ENCODE measurements at regions of chr10 and their contacts with region 1.

Region 1: DNA sequence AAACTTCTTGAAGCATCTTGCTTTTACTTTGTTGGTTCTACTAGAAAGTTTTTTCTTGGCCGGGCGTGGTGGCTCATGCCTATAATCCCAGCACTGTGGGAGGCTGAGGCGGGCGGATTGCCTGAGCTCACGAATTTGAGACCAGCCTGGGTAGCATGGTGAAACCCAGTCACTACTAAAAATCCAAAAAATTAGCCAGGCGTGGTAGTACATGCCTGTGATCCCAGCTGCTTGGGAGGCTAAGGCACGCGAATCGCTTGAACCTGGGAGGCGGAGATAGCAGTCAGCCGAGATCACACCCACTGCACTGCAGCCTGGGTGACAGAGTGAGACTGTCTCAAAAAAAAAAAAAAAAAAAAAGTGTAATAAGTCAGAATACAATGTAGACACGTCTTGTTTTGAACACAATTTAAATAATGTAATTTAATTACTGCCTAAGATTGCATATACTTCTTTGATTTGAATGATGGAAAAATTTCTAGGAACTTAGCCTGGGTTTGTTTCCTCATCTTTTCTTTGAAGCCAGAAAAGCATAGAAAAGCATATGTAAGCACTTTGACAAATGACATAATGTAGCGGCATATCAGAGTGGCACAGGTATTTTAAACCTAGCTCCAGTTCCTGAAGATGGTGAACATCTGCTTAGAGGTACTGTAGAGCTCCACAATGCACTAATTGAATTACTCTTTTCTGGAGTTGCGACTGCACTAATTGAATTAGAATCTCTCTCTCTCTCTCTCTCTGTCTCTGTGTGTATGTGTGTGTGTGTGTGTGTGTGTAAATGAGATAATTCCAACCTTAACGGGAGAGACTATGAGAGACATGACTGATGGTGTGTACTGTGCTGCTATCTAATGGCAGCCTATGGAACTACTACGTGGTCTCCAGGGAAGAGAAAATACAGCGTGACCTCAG is 87.8 kb downstream of the BTRC start:
- DNase-seq: peak in 1 of 2 donors; percentile 17
- ATAC-seq: peak; percentile 82 to 93 (median 84)
- H3K4me3 ChIP-seq: no peak overlapping the region
- H3K27ac ChIP-seq: no peak overlapping the region
- H3K4me1 ChIP-seq: peaks cover 0 to 34% (median 16%) of the 10 kb centered on the region in 9 donors
- H3K27me3 ChIP-seq: no peaks in the 10 kb centered on the region
- CTCF ChIP-seq: peak in 8 of 9 donors; percentile 29 to 68 (median 62)

Region 2: GRCh38 chr10:101291331-101292193 is 150.2 kb before region 1 on chr10:
- intact Hi-C with region 1: loop called in 4 of 10 experiments (anchors 2 to 10 kb)
- DNase-seq: peak; percentile 59 to 69
- ATAC-seq: peak; percentile 76 to 84 (median 80)
- H3K4me3 ChIP-seq: peak overlapping the region; percentile 41 to 67 (median 62)
- H3K27ac ChIP-seq: peak overlapping the region in 6 of 10 donors; percentile 53 to 81 (median 68)
- H3K4me1 ChIP-seq: peaks cover 0 to 22% (median 12%) of the 10 kb centered on the region in 9 donors
- H3K27me3 ChIP-seq: peaks cover 5 to 97% (median 68%) of the 10 kb centered on the region in 7 donors
- CTCF ChIP-seq: peak; percentile 32 to 78 (median 68)

Region 3: DNA sequence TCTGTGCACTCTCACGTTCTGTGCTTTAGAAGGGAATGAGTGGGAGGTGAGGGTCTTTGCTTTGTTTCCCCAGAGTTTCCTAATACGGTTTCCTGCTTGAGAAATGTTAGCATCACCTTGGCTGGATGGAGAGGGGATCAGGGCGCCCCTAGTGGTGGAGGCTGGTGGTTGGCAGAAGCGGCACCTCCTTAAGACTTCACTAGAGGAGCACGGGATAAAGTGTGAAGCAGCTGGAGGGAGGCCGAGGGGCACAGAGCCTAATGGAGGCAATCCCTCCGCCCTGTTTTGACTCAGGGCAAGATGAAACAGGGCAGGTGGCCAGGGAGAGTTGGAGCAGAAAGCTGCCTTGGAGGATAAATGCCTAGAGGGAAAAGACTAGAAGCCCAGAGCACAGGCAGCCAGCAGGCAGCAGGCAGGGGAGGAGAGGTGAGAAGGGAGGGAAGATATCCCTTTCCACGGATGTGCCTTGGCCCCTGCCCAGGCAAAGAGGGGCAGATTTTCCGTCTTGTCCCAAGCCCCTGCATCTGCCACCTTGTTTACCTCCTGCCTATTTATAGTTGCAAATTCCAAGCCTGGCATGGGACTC is 143.8 kb before region 1 on chr10:
- intact Hi-C with region 1: loop called in 9 of 10 experiments (anchors 1 to 10 kb)
- DNase-seq: peak; percentile 43 to 47
- ATAC-seq: peak in 6 of 8 donors; percentile 15 to 55 (median 39)
- H3K4me3 ChIP-seq: no peak overlapping the region
- H3K27ac ChIP-seq: no peak overlapping the region
- H3K4me1 ChIP-seq: peaks cover 0 to 16% (median 3%) of the 10 kb centered on the region in 9 donors
- H3K27me3 ChIP-seq: peaks cover 0 to 52% (median 31%) of the 10 kb centered on the region in 7 donors
- CTCF ChIP-seq: peak; percentile 61 to 87 (median 82)

Region 4: DNA sequence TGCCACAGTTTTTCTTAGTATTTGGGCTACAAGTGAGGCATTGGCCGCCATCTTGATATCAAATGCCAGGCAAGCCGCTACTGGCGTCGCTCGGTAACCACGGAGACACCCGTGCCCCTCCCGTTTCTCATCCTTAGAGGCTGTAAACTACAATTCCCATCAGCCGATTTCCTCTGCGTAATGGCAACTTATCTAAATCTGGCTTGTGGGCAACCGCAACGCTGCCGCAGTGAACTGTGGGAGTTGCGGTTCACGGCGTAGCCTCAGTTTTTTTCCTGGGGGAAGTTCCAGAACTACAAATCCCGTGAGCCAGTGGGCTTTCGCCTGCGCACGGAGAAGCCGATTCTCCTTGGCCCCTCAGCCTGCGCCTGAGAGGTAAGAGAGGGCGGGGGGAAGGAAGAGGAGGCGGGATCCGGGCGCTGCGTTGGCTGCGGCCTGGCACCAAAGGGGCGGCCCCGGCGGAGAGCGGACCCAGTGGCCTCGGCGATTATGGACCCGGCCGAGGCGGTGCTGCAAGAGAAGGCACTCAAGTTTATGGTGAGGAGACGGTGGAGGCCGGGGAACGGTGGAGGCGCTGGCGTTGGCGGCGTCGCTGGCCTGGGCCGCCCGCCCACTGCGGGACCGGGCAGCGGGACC is 88.0 kb before region 1 on chr10 and contains the start of gene BTRC:
- intact Hi-C with region 1: loop called in 2 of 10 experiments (anchors 5 kb)
- DNase-seq: peak; percentile 93 to 98
- ATAC-seq: peak; percentile 98 to 99 (median 98)
- H3K4me3 ChIP-seq: peak within 1 kb of the TSS; percentile 66 to 99 (median 90)
- H3K27ac ChIP-seq: peak within 1 kb of the TSS; percentile 76 to 97 (median 92)
- H3K4me1 ChIP-seq: peaks cover 0 to 39% (median 26%) of the 10 kb centered on the region in 9 donors
- H3K27me3 ChIP-seq: peaks cover 0 to 16% (median 0%) of the 10 kb centered on the region in 7 donors
- CTCF ChIP-seq: no peak
- total RNA-seq, gene BTRC: 25.1 to 49.9 (median 36.0) TPM